ENCODE measurements at regions of chr3 and their contacts with region 1.

Region 1: GRCh38 chr3:94004301-94004910 is 24.0 kb downstream of the STX19 start:
- DNase-seq: no peak
- ATAC-seq: peak; percentile 78
- H3K4me3 Mint-ChIP-seq: peak overlapping the region; percentile 44
- H3K27ac Mint-ChIP-seq: no peak overlapping the region
- H3K4me1 Mint-ChIP-seq: peaks cover 2% of the 10 kb centered on the region
- H3K27me3 Mint-ChIP-seq: no peaks in the 10 kb centered on the region

Region 2: DNA sequence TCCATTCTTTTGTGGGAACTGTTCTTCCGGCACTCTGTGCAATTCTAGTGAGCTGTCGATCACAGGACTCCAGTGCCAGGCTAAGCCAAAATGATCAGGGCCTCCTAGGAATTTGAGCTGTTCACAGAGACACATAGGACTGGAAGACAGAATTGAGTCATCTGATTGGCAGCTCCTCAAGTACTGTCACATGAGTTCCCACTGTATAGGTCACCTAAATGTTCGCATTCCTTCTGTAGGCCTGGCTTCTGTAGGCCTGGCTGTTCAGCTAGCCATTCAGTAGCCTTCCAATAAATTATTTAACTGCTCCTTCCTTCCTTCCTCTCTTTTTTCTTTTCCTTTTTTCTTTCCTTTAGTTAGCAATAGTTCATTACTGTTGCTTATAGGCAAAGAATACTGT is 35.0 kb before region 1 on chr3:
- CTCF ChIA-PET with region 1: no interaction called
- POLR2A ChIA-PET with region 1: no interaction called
- intact Hi-C with region 1: no loop called
- DNase-seq: no peak
- ATAC-seq: no peak
- H3K4me3 Mint-ChIP-seq: no peak overlapping the region
- H3K27ac Mint-ChIP-seq: no peak overlapping the region
- H3K4me1 Mint-ChIP-seq: peaks cover 9% of the 10 kb centered on the region
- H3K27me3 Mint-ChIP-seq: peaks cover 10% of the 10 kb centered on the region

Region 3: DNA sequence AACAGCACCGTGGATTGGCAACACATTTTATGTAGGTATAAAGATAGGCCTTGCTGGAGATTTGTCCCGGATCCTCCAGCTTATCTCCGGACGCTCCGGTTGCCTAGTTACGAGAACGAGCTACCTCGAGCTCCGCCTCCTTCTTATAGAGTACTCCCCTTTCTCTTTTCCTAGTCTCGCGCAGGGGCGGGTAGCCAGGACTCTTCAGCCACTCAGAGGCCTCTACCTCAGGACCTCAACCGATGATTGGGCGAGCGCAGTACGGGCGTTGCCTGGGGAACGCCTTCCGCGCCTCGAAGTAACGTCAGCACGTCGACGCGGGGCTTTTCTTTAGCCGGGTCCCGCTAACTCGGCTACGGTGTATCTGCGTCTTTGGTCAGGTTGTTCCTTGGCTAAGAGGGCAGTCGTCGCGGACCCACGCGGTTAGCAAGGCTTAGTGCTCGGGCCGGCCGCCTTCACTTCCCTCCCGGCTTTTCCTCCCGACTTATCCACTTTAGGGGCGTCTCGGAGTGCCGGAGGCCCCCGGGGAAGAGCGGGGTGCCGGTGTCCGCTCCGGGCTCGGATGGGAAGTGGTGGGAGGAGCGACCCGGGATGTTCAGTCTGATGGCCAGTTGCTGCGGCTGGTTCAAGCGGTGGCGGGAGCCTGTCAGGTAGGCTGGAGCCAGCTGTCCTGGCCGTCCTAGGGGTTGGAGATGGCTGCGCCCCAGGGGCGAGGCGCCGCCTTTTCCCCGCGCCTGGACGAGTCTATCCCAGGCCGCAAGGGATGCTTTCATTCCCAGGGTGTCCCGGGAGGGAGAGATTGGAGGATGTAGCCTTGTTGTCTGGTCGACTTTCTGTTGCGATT is 24.4 kb before region 1 on chr3 and contains the start of gene ARL13B:
- CTCF ChIA-PET with region 1: interaction called, 3 read pairs
- POLR2A ChIA-PET with region 1: no interaction called
- intact Hi-C with region 1: loop called in 1 of 2 experiments (anchors 2 kb)
- DNase-seq: peak; percentile 96
- ATAC-seq: peak; percentile 100
- H3K4me3 Mint-ChIP-seq: peak within 1 kb of the TSS; percentile 82
- H3K27ac Mint-ChIP-seq: peak within 1 kb of the TSS; percentile 51
- H3K4me1 Mint-ChIP-seq: peaks cover 16% of the 10 kb centered on the region
- H3K27me3 Mint-ChIP-seq: peaks cover 2% of the 10 kb centered on the region
- total RNA-seq, gene ARL13B: 8.7 to 11.2 TPM

Region 4: GRCh38 chr3:94062431-94063404 is 58.3 kb after region 1 on chr3 and contains the starts of genes DHFR2 and NSUN3:
- CTCF ChIA-PET with region 1: interaction called, 8 read pairs
- POLR2A ChIA-PET with region 1: interaction called, 5 read pairs
- intact Hi-C with region 1: loop called in 1 of 2 experiments (anchors 1 kb)
- DNase-seq: peak; percentile 88
- ATAC-seq: peak; percentile 87
- H3K4me3 Mint-ChIP-seq: peak within 1 kb of the TSS; percentile 92
- H3K27ac Mint-ChIP-seq: peak within 1 kb of the TSS; percentile 99
- H3K4me1 Mint-ChIP-seq: peaks cover 43% of the 10 kb centered on the region
- H3K27me3 Mint-ChIP-seq: no peaks in the 10 kb centered on the region
- total RNA-seq, gene DHFR2: 7.4 to 10.3 TPM
- total RNA-seq, gene NSUN3: 15.4 to 17.1 TPM

Region 5: DNA sequence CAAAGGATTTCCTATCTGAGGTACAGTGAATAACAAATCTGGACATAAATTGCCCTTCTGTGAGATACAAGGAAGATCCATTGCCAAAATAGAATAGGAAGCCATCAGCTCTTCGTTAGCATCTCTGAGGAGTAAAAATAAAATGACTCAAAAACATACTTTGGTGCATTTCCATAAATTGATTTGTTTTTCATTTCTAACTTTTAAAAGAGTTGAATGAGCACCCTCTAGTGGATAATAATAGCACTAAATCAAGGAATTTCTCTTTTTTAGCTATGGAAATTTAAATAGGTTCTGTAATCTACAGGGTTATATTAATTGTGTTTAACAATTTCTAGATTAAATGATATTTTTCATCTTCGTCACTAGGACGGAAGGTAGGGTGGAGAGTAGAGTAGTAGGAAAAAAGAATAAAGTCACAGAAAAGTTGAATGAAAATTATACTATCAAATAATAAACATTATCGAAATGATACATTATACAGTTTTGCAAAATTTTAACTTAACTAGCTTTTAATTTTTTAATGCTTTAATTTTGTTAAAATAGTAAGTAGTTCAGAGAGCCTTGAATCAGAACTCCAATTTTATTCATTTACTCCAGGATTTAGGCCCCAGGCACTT is 64.9 kb after region 1 on chr3:
- CTCF ChIA-PET with region 1: interaction called, 44 read pairs
- POLR2A ChIA-PET with region 1: no interaction called
- intact Hi-C with region 1: loop called (anchors 1 kb)
- DNase-seq: no peak
- ATAC-seq: no peak
- H3K4me3 Mint-ChIP-seq: no peak overlapping the region
- H3K27ac Mint-ChIP-seq: no peak overlapping the region
- H3K4me1 Mint-ChIP-seq: peaks cover 77% of the 10 kb centered on the region
- H3K27me3 Mint-ChIP-seq: no peaks in the 10 kb centered on the region

Region 6: DNA sequence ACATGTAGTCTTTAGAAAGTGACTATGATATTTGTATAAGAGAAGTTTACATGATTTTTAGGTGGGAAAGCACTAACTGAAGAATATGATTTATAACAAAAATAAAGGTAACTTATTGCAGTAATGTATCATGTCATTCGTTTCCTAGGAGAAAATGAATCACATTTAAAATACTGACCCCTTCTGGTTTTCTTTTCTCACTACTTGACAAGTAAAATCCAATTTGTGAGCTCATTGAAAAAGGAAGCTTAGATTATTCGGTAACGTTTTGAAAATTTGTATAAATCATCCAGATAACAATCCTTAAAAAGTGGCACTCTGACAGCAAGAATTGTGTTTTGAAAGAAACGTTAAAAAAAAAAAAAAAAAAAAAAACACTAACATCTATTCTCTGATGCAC is 97.4 kb after region 1 on chr3:
- CTCF ChIA-PET with region 1: interaction called, 3 read pairs
- POLR2A ChIA-PET with region 1: no interaction called
- intact Hi-C with region 1: loop called in 1 of 2 experiments (anchors 1 kb)
- DNase-seq: no peak
- ATAC-seq: no peak
- H3K4me3 Mint-ChIP-seq: no peak overlapping the region
- H3K27ac Mint-ChIP-seq: no peak overlapping the region
- H3K4me1 Mint-ChIP-seq: peaks cover 3% of the 10 kb centered on the region
- H3K27me3 Mint-ChIP-seq: no peaks in the 10 kb centered on the region

Region 7: GRCh38 chr3:94173676-94174434 is 169.4 kb after region 1 on chr3:
- CTCF ChIA-PET with region 1: no interaction called
- POLR2A ChIA-PET with region 1: no interaction called
- intact Hi-C with region 1: no loop called
- DNase-seq: no peak
- ATAC-seq: no peak
- H3K4me3 Mint-ChIP-seq: no peak overlapping the region
- H3K27ac Mint-ChIP-seq: no peak overlapping the region
- H3K4me1 Mint-ChIP-seq: no peaks in the 10 kb centered on the region
- H3K27me3 Mint-ChIP-seq: peaks cover 4% of the 10 kb centered on the region

Region 8: DNA sequence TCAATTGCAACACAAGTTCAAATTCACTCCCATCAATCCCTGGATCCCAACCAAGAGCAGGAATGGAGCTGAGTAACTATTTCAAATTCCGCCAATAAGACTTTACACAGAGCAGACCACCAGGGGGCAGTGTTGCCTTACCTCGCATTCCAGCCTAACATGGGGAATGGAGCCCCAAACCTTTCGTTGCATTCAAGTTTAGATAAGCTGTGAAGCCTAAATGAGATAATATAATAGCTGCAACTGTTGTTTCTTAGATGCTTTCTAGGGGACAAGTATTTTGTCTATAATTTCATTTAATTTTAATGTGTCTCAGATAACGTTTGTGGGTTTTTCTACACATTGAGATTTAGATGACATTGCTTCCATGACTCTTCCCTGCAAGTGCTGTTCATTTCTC is 245.2 kb after region 1 on chr3:
- CTCF ChIA-PET with region 1: no interaction called
- POLR2A ChIA-PET with region 1: no interaction called
- intact Hi-C with region 1: loop called (anchors 1 to 10 kb)
- DNase-seq: peak; percentile 82
- ATAC-seq: no peak
- H3K4me3 Mint-ChIP-seq: no peak overlapping the region
- H3K27ac Mint-ChIP-seq: no peak overlapping the region
- H3K4me1 Mint-ChIP-seq: no peaks in the 10 kb centered on the region
- H3K27me3 Mint-ChIP-seq: peaks cover 8% of the 10 kb centered on the region